OCI-LY7 (cell line): ENCODE measurements at regions of chr3 and their contacts with region 1.

Region 1: GRCh38 chr3:71064288-71064955 is 519.1 kb downstream of the FOXP1 start:
- DNase-seq: peak; percentile 57
- H3K4me3 ChIP-seq: peak overlapping the region; percentile 70
- H3K27ac ChIP-seq: peak overlapping the region; percentile 48
- H3K4me1 ChIP-seq: peaks cover 63% of the 10 kb centered on the region
- CTCF ChIP-seq: no peak

Region 2: GRCh38 chr3:71031914-71032521 is 32.4 kb before region 1 on chr3:
- CTCF ChIA-PET with region 1: no interaction called
- POLR2A ChIA-PET with region 1: interaction called, 13 read pairs
- intact Hi-C with region 1: loop called (anchors 2 kb)
- DNase-seq: peak; percentile 86
- H3K4me3 ChIP-seq: peak overlapping the region; percentile 46
- H3K27ac ChIP-seq: peak overlapping the region; percentile 63
- H3K4me1 ChIP-seq: peaks cover 45% of the 10 kb centered on the region
- CTCF ChIP-seq: no peak

Region 3: DNA sequence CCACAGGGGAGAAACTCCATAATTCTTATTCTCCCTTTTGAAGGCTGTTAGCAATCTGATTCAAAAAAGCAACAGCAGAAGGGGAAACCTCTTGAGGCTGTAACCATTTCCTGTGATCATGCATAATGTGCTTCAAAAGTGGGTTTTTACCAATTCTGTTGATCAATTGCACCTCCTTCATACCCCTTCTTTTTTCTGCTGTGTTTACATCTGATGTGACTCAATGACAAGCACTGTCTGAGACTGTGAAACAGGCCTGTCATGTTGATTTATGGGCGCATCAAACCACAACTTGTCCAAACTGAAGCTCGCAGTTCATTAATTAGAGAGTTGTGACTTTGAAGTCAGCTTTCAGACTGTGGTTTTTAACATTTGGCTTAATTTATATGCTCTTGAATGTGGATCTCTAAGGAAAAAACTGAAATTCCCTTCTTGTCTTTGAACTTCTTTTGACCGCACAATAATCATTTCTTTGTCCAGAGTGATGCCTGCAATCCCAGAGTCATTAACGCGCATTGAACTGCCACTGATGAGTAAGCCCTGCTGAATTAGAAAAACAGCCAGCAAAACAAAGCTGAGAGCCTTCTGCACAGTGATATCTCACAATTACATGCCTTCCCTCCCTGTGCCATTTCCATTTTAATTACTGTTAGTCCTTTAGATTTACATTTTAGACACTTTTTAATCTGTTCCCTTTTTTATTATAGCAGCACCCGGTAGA is 13.7 kb before region 1 on chr3:
- CTCF ChIA-PET with region 1: no interaction called
- POLR2A ChIA-PET with region 1: interaction called, 15 read pairs
- intact Hi-C with region 1: no loop called
- DNase-seq: no peak
- H3K4me3 ChIP-seq: no peak overlapping the region
- H3K27ac ChIP-seq: no peak overlapping the region
- H3K4me1 ChIP-seq: peaks cover 18% of the 10 kb centered on the region
- CTCF ChIP-seq: no peak